ENCODE measurements at regions of chr2 and their contacts with region 1.

Region 1: DNA sequence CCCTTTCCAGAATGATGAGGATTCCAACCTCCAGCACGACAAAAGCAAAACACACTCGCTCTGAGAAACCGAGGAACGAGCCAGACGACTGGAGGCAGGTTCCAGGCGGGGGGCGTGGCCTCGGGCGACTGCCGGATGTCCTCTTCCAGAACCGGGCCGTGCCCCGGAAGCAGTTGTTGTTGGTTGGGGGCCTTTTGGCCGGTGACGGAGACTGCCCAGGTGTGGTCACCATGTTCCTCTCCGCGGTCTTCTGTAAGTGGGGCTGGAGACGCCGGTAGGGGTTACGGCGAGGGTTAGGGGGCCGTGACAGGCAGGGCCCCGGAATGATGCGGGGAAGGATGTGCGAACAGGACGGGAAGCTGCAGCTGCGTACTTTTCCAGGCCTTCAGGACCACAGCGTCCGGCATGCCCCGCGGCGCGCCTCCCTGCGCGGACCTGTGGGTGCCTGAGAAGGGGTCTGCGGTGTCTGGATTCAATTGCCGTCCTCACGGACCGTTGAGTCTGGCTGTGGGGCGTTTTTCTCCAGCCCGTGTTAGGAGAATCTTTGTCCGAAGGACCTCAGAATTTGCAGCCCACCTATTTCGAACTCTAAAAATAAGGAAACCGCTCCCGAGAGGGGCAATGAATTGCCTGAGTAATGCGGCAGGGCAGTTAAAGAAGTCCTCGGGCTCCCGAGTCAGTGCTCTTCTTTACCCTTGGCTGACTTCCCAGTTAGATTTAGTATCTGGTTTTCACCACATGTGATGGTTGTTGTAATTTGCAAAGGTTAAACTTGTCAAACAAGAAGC is at the start of gene MRPL33:
- DNase-seq: peak; percentile 85 to 94 (median 91)
- H3K4me3 ChIP-seq: peak within 1 kb of the TSS; percentile 92 to 99 (median 96)
- H3K4me3 Mint-ChIP-seq: peak within 1 kb of the TSS; percentile 99 to 100
- H3K27ac ChIP-seq: peak within 1 kb of the TSS; percentile 89 to 95
- H3K27ac Mint-ChIP-seq: peak within 1 kb of the TSS; percentile 96 to 99 (median 99)
- H3K4me1 ChIP-seq: peaks cover 34 to 52% of the 10 kb centered on the region in 2 donors
- H3K4me1 Mint-ChIP-seq: peaks cover 50% of the 10 kb centered on the region
- H3K27me3 ChIP-seq: no peaks in the 10 kb centered on the region
- H3K27me3 Mint-ChIP-seq: peaks cover 0 to 3% (median 0%) of the 10 kb centered on the region in 3 donors
- CTCF ChIP-seq: no peak
- polyA plus RNA-seq, gene MRPL33: 67.4 to 341 (median 331) TPM

Region 2: GRCh38 chr2:27823569-27823968 is 51.8 kb after region 1 on chr2:
- intact Hi-C with region 1: loop called in 1 of 2 experiments (anchors 10 kb)
- DNase-seq: no peak
- H3K4me3 ChIP-seq: no peak overlapping the region
- H3K4me3 Mint-ChIP-seq: no peak overlapping the region
- H3K27ac ChIP-seq: no peak overlapping the region
- H3K27ac Mint-ChIP-seq: peak overlapping the region in 1 of 7 donors; percentile 40
- H3K4me1 ChIP-seq: peaks cover 14 to 23% of the 10 kb centered on the region in 2 donors
- H3K4me1 Mint-ChIP-seq: peaks cover 43% of the 10 kb centered on the region
- H3K27me3 ChIP-seq: no peaks in the 10 kb centered on the region
- H3K27me3 Mint-ChIP-seq: peaks cover 0 to 1% (median 0%) of the 10 kb centered on the region in 3 donors
- CTCF ChIP-seq: no peak

Measured in CD14-positive monocyte (primary cell).